Breast epithelium (tissue), 4 donors: ENCODE measurements at regions of chr15 and their contacts with region 1.

Region 1: GRCh38 chr15:95105229-95105628 is 873.9 kb downstream of the MCTP2 start:
- DNase-seq: no peak
- H3K4me3 ChIP-seq: no peak overlapping the region
- H3K27ac ChIP-seq: no peak overlapping the region
- H3K4me1 ChIP-seq: no peaks in the 10 kb centered on the region
- H3K27me3 ChIP-seq: no peaks in the 10 kb centered on the region
- CTCF ChIP-seq: no peak
- POLR2A ChIP-seq: no peak

Region 2: DNA sequence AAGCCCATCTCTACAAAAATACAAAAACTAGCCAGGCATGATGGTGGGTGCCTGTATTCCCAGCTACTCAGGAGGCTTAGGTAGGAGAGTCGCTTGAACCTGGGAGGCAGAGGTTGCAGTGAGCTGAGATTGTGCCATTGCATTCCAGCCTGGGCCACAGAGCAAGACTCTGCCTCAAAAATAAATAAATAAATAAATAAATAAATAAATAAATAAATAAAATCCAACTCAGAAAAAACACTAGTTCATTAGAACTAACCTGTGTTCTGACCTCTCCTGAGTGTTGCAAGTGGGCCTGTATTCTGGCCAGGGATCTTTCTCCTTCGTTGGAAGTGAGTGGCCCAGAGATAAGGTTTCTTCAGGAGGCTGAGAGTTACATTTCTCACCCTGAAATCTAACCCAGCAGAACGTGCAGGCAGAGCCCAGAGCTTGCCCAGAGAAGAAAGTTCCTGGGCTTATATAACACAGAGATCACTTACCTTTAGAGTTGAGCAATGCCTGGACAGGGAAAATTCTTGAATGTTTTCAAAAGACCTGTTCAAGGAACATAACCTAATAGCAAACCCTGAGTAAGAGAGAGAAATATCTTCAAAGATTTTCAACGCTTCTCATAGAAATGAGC is 290.0 kb before region 1 on chr15:
- intact Hi-C with region 1: loop called (anchors 5 kb)
- DNase-seq: no peak
- H3K4me3 ChIP-seq: no peak overlapping the region
- H3K27ac ChIP-seq: no peak overlapping the region
- H3K4me1 ChIP-seq: no peaks in the 10 kb centered on the region
- H3K27me3 ChIP-seq: no peaks in the 10 kb centered on the region
- CTCF ChIP-seq: no peak
- POLR2A ChIP-seq: no peak